Right lobe of liver (tissue), 6 donors: ENCODE measurements at regions of chr19 and their contacts with region 1.

Region 1: GRCh38 chr19:10332955-10333757 is at the start of gene RAVER1:
- DNase-seq: peak; percentile 99
- ATAC-seq: peak; percentile 79 to 87 (median 82)
- H3K4me3 ChIP-seq: peak within 1 kb of the TSS; percentile 90 to 94 (median 91)
- H3K27ac ChIP-seq: peak within 1 kb of the TSS; percentile 70 to 84 (median 74)
- H3K4me1 ChIP-seq: peaks cover 0 to 24% (median 12%) of the 10 kb centered on the region in 4 donors
- H3K27me3 ChIP-seq: no peaks in the 10 kb centered on the region
- CTCF ChIP-seq: no peak
- POLR2A ChIP-seq: peak; percentile 76
- total RNA-seq, gene RAVER1: 5.2 to 9.5 (median 7.1) TPM

Region 2: DNA sequence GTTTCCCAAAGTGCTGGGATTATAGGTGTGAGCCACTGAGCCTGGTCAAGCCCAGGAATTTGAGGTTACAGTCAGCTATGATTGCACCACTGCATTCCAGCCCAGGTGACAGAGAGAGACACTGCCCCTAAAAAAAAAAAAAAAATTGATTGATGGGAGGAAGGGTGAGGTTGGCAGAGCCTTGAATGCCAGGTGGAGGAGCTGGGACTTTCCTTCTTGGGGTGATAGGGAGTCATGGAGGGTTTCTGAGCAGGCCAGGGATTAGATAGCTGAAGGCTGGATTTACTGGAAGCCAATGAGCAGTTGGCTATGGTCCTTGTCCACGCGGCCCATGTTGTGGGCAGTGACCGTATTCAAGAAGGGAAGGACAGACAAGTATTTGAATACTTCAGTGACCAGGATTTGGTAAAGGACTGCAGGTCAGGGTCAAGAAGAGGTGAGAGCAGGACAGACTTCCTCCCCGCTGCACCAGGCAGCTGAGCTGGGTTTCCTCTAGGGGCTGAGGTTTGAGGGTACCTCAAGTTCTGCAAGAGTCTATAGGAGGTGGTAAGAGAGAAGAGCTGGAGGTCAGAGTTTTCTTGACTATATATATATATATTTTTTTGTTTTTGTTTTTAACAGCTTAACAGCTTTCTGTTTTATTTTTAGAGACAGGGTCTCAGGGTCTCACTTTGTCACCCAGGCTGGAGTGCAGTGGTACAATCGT is 53.3 kb before region 1 on chr19:
- intact Hi-C with region 1: no loop called
- DNase-seq: no peak
- ATAC-seq: peak in 2 of 4 donors; percentile 31 to 38
- H3K4me3 ChIP-seq: no peak overlapping the region
- H3K27ac ChIP-seq: no peak overlapping the region
- H3K4me1 ChIP-seq: peaks cover 0 to 4% (median 0%) of the 10 kb centered on the region in 4 donors
- H3K27me3 ChIP-seq: no peaks in the 10 kb centered on the region
- CTCF ChIP-seq: no peak
- POLR2A ChIP-seq: no peak

Region 3: GRCh38 chr19:10380313-10381102 is 47.4 kb after region 1 on chr19 and contains the start of gene TYK2:
- intact Hi-C with region 1: loop called in 1 of 2 experiments (anchors 10 kb)
- DNase-seq: peak; percentile 98
- ATAC-seq: peak; percentile 97 to 99 (median 98)
- H3K4me3 ChIP-seq: peak within 1 kb of the TSS; percentile 89 to 98 (median 98)
- H3K27ac ChIP-seq: peak within 1 kb of the TSS; percentile 78 to 89 (median 79)
- H3K4me1 ChIP-seq: peaks cover 0 to 3% (median 2%) of the 10 kb centered on the region in 4 donors
- H3K27me3 ChIP-seq: no peaks in the 10 kb centered on the region
- CTCF ChIP-seq: no peak
- POLR2A ChIP-seq: peak; percentile 68
- total RNA-seq, gene TYK2: 63.9 to 106 (median 72.9) TPM